PC-3 (cell line): ENCODE measurements at regions of chr5 and their contacts with region 1.

Region 1: DNA sequence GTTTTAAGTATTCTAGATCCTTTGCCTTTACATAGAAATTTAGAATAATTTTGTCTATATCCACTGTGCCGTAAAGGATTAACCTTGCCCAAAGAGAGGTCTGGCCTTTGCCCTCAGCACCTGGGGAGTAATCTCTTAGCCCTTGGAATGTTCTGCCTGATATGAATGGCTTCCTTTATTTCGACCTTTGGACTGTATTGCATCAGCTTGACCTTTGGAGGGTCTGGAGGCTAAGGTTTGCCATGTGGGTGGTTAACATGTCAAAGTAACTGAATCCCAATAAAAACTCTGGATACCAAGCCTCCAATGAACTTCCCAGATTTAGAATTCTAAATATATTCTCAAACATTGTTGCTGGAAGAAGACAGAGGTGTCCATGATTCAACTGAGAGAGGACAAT is 54.7 kb downstream of the NR2F1 start:
- DNase-seq: no peak
- ATAC-seq: no peak
- H3K4me3 ChIP-seq: no peak overlapping the region
- H3K27ac ChIP-seq: no peak overlapping the region
- H3K4me1 ChIP-seq: no peaks in the 10 kb centered on the region
- H3K27me3 ChIP-seq: no peaks in the 10 kb centered on the region
- CTCF ChIP-seq: no peak

Region 2: GRCh38 chr5:93582677-93583438 is 54.8 kb before region 1 on chr5 and contains the start of gene NR2F1:
- CTCF ChIA-PET with region 1: no interaction called
- POLR2A ChIA-PET with region 1: no interaction called
- intact Hi-C with region 1: no loop called
- DNase-seq: peak; percentile 98
- ATAC-seq: peak; percentile 50
- H3K4me3 ChIP-seq: peak within 1 kb of the TSS; percentile 86
- H3K27ac ChIP-seq: peak within 1 kb of the TSS; percentile 70
- H3K4me1 ChIP-seq: peaks cover 20% of the 10 kb centered on the region
- H3K27me3 ChIP-seq: no peaks in the 10 kb centered on the region
- CTCF ChIP-seq: no peak
- total RNA-seq, gene NR2F1: 88.4 and 118 TPM in 2 replicates

Region 3: DNA sequence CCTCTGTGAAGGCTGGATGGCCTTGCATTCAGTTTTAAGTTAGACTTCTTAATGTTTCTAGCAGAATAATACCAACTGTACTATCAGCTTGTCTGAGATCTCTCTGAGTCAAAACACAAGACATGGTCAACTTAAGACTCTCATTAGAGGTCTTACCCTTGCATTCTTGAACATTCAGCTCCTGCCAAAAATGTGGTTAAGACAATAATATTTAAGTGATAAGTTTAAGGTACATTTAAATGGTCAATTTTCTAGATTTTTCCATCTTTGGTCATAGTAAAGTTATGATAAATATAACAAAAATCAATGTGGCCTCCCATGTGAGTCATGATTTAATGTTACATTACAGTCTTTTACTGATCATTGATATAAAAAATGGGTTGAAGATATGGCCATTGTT is 20.3 kb after region 1 on chr5:
- CTCF ChIA-PET with region 1: no interaction called
- POLR2A ChIA-PET with region 1: interaction called, 12 read pairs
- intact Hi-C with region 1: no loop called
- DNase-seq: no peak
- ATAC-seq: no peak
- H3K4me3 ChIP-seq: no peak overlapping the region
- H3K27ac ChIP-seq: no peak overlapping the region
- H3K4me1 ChIP-seq: no peaks in the 10 kb centered on the region
- H3K27me3 ChIP-seq: no peaks in the 10 kb centered on the region
- CTCF ChIP-seq: no peak

Region 4: GRCh38 chr5:93691997-93692396 is 54.3 kb after region 1 on chr5:
- CTCF ChIA-PET with region 1: no interaction called
- POLR2A ChIA-PET with region 1: no interaction called
- intact Hi-C with region 1: no loop called
- DNase-seq: no peak
- ATAC-seq: no peak
- H3K4me3 ChIP-seq: no peak overlapping the region
- H3K27ac ChIP-seq: no peak overlapping the region
- H3K4me1 ChIP-seq: no peaks in the 10 kb centered on the region
- H3K27me3 ChIP-seq: no peaks in the 10 kb centered on the region
- CTCF ChIP-seq: no peak